ENCODE measurements at regions of chr1 and their contacts with region 1.

Region 1: GRCh38 chr1:197614916-197615692 is 160.2 kb downstream of the DENND1B start:
- DNase-seq: no peak
- H3K4me3 ChIP-seq: no peak overlapping the region; a peak in 1 of 4 replicates
- H3K27ac ChIP-seq: no peak overlapping the region
- H3K4me1 ChIP-seq: peaks cover 0 to 3% of the 10 kb centered on the region in 2 experiments; a peak in 2 of 4 replicates
- H3K27me3 ChIP-seq: no peaks in the 10 kb centered on the region
- CTCF ChIP-seq: peak; percentile 73
- EP300 ChIP-seq: no peak
- RAD21 ChIP-seq: peak; percentile 80

Region 2: DNA sequence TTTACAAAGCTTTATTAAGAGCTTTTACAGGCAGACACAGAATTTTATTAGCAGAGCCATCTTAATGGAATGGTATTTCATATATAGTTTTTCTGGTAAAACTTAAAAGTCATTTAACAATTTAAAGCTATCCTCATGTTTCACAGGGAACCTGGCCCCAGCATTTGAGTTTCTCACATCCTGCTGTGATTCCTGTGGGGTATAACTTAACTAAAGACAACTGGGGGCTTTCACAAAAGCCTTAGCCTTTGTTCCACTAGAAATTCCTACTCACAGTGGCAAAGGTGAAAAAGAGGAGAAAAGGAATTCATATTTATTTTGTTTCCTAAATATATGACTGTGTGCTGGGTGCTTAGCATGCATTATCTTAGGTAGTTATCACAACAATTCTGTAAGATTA is 73.7 kb before region 1 on chr1:
- CTCF ChIA-PET with region 1: no interaction called
- POLR2A ChIA-PET with region 1: no interaction called
- DNase-seq: no peak
- H3K4me3 ChIP-seq: no peak overlapping the region
- H3K27ac ChIP-seq: no peak overlapping the region
- H3K4me1 ChIP-seq: no peaks in the 10 kb centered on the region; a peak in 1 of 4 replicates
- H3K27me3 ChIP-seq: no peaks in the 10 kb centered on the region
- CTCF ChIP-seq: no peak
- EP300 ChIP-seq: no peak
- RAD21 ChIP-seq: no peak

Region 3: GRCh38 chr1:197915862-197916499 is 300.9 kb after region 1 on chr1:
- CTCF ChIA-PET with region 1: interaction called, 21 read pairs
- POLR2A ChIA-PET with region 1: no interaction called
- DNase-seq: peak; percentile 90
- H3K4me3 ChIP-seq: peak overlapping the region; percentile 81 to 91
- H3K27ac ChIP-seq: peak overlapping the region; percentile 56 to 66
- H3K4me1 ChIP-seq: peaks cover 0 to 33% of the 10 kb centered on the region in 2 experiments; a peak in 2 of 4 replicates
- H3K27me3 ChIP-seq: no peaks in the 10 kb centered on the region
- CTCF ChIP-seq: peak; percentile 81
- EP300 ChIP-seq: no peak
- RAD21 ChIP-seq: peak; percentile 50

Region 4: GRCh38 chr1:197924516-197925123 is 309.5 kb after region 1 on chr1:
- CTCF ChIA-PET with region 1: interaction called, 26 read pairs
- POLR2A ChIA-PET with region 1: no interaction called
- DNase-seq: peak; percentile 74
- H3K4me3 ChIP-seq: no peak overlapping the region; a peak in 1 of 4 replicates
- H3K27ac ChIP-seq: no peak overlapping the region; a peak in 1 of 4 replicates
- H3K4me1 ChIP-seq: no peaks in the 10 kb centered on the region; a peak in 2 of 4 replicates
- H3K27me3 ChIP-seq: no peaks in the 10 kb centered on the region
- CTCF ChIP-seq: peak; percentile 90
- EP300 ChIP-seq: no peak
- RAD21 ChIP-seq: peak; percentile 80

Region 5: GRCh38 chr1:198465201-198466144 is 850.4 kb after region 1 on chr1:
- CTCF ChIA-PET with region 1: interaction called, 11 read pairs
- POLR2A ChIA-PET with region 1: no interaction called
- DNase-seq: peak; percentile 20
- H3K4me3 ChIP-seq: no peak overlapping the region; a peak in 1 of 4 replicates
- H3K27ac ChIP-seq: peak overlapping the region; percentile 36 to 44; a peak in 3 of 4 replicates
- H3K4me1 ChIP-seq: peaks cover 11 to 14% of the 10 kb centered on the region in 2 experiments
- H3K27me3 ChIP-seq: no peaks in the 10 kb centered on the region
- CTCF ChIP-seq: peak; percentile 80
- EP300 ChIP-seq: no peak
- RAD21 ChIP-seq: peak; percentile 86